ENCODE measurements at regions of chr5 and their contacts with region 1.

Region 1: DNA sequence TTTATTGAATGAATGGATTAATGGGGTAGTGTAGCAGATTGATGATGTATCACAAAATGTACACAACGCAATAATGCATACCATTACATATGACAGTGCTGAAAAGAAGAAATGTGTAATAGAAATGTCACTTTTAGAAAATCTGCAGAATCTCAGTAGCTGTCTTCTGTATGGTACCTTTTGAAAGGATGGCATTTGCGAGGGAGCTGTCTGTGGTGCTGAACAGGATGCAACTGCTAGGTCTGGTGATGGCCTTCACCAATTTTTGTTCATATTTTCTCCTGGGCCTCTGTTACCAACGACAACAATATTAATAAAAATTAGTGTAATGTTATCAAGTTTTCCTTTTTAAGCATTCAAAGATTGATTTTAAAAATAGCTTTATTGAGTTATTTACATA is 36.2 kb upstream of the OTULIN start:
- DNase-seq: peak; percentile 48
- H3K4me3 ChIP-seq: no peak overlapping the region
- H3K27ac ChIP-seq: no peak overlapping the region
- H3K4me1 ChIP-seq: no peaks in the 10 kb centered on the region
- H3K27me3 ChIP-seq: peaks cover 0 to 2% of the 10 kb centered on the region in 2 experiments
- CTCF ChIP-seq: no peak
- POLR2A ChIP-seq: no peak

Region 2: DNA sequence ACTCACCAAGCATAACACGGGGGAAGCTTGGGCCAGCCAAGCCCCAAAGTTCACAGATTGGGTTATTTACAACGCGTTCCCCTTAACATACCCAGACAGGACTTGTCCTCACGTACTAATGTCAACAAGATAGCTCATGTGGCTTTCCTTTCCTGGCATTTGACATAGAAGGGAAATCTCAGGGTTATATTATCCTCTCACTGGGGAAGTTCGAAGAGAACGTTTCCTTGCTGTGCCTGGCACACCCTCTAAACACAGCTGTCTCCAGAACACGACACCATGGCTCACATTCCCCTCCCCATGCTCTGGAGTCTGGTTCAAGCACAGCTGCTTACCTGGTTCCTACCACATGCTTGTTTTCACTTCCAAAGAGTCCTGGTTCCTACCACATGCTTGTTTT is 93.6 kb before region 1 on chr5:
- CTCF ChIA-PET with region 1: no interaction called
- POLR2A ChIA-PET with region 1: no interaction called
- dilution Hi-C with region 1: loop called (anchors 25 kb)
- intact Hi-C with region 1: no loop called
- DNase-seq: no peak
- H3K4me3 ChIP-seq: no peak overlapping the region
- H3K27ac ChIP-seq: no peak overlapping the region
- H3K4me1 ChIP-seq: no peaks in the 10 kb centered on the region
- H3K27me3 ChIP-seq: peaks cover 0 to 8% of the 10 kb centered on the region in 2 experiments
- CTCF ChIP-seq: no peak
- POLR2A ChIP-seq: no peak

Measured in endothelial cell of umbilical vein (primary cell).